ENCODE measurements at regions of chr2 and their contacts with region 1.

Region 1: DNA sequence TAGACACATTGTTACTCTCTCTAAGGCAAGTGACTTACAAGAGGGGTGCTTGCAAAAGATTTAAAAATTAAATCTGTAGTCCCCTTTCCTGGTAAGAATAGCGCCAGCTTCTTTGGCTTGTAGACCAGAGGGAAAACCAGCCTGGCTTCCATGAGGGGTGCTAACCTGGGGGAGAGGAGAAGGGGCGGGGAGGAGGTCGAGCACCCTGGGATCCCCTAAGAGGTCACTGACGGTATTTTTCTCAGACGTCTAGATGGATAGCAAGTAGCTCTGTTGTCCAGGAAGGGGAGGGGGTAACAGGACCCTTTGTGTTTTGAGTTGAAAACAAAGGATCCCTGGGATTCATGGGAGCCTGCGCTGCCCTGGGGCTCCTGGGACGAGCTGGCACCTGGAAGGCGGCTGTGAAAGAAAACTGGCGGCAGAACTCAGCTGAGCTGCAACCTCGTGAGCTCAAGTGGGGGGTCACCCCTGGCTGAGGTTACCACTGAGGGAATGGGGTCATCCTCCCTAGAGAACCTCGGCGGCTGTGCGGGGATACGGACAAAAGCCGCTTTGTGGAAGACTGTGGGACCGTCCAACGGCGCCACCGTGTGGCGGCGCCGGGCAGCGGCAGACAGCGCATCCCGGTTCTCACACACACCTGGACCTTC is 37.8 kb upstream of the MRPL19 start:
- DNase-seq: peak; percentile 21 to 57 (median 49)
- ATAC-seq: peak; percentile 84
- H3K4me3 ChIP-seq: no peak overlapping the region
- H3K4me3 Mint-ChIP-seq: peak overlapping the region in 4 of 10 donors; percentile 28 to 45 (median 38)
- H3K27ac ChIP-seq: no peak overlapping the region
- H3K27ac Mint-ChIP-seq: no peak overlapping the region
- H3K4me1 ChIP-seq: no peaks in the 10 kb centered on the region
- H3K4me1 Mint-ChIP-seq: peaks cover 0 to 1% (median 0%) of the 10 kb centered on the region in 7 donors
- H3K27me3 ChIP-seq: peaks cover 0 to 4% of the 10 kb centered on the region in 2 donors
- H3K27me3 Mint-ChIP-seq: peaks cover 46 to 74% (median 65%) of the 10 kb centered on the region in 5 donors

Region 2: GRCh38 chr2:75053484-75054112 is 555.2 kb before region 1 on chr2:
- CTCF ChIA-PET with region 1: no interaction called
- POLR2A ChIA-PET with region 1: no interaction called
- intact Hi-C with region 1: loop called in 1 of 2 experiments (anchors 5 kb)
- DNase-seq: no peak
- ATAC-seq: no peak
- H3K4me3 ChIP-seq: no peak overlapping the region
- H3K4me3 Mint-ChIP-seq: no peak overlapping the region
- H3K27ac ChIP-seq: no peak overlapping the region
- H3K27ac Mint-ChIP-seq: no peak overlapping the region
- H3K4me1 ChIP-seq: no peaks in the 10 kb centered on the region
- H3K4me1 Mint-ChIP-seq: no peaks in the 10 kb centered on the region
- H3K27me3 ChIP-seq: no peaks in the 10 kb centered on the region
- H3K27me3 Mint-ChIP-seq: peaks cover 0 to 3% (median 0%) of the 10 kb centered on the region in 5 donors

Region 3: DNA sequence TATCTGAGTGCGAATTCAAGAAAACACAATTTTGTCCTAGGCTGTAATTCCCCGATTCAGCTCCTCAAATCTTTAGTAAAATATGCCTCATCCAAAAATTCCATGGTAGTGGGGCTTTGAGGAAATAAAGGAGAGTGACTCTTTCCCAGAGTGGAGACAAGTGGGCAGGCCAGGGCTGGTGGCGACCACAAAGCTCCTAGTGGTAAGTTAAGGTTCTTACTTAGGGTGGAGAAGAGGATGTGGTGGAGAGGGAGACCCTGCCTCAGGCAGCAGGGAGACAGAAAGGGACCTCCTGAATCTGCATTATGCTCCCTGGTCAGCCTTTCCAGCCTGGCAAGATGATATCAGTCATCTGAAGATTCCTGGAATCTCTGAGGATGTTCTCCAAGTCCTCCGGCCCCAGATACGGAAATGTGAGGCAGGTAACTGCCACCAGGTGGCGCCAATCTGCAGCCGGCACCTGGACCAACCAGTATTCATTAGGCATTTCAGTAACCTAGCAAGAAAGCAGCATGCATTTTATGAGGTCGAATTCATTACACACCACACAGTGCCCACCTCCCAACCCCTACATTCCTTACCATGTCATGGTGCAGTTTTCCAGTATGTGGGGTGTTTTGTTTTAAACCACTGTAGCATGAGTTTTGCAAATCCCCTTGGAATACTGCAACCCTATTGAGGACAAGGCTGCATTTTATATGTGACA is 544.0 kb before region 1 on chr2:
- CTCF ChIA-PET with region 1: no interaction called
- POLR2A ChIA-PET with region 1: no interaction called
- intact Hi-C with region 1: loop called in 1 of 2 experiments (anchors 1 kb)
- DNase-seq: peak in 8 of 9 donors; percentile 12 to 45 (median 30)
- ATAC-seq: no peak
- H3K4me3 ChIP-seq: no peak overlapping the region
- H3K4me3 Mint-ChIP-seq: no peak overlapping the region
- H3K27ac ChIP-seq: no peak overlapping the region
- H3K27ac Mint-ChIP-seq: no peak overlapping the region
- H3K4me1 ChIP-seq: no peaks in the 10 kb centered on the region
- H3K4me1 Mint-ChIP-seq: peaks cover 0 to 16% (median 0%) of the 10 kb centered on the region in 7 donors
- H3K27me3 ChIP-seq: no peaks in the 10 kb centered on the region
- H3K27me3 Mint-ChIP-seq: no peaks in the 10 kb centered on the region

Region 4: DNA sequence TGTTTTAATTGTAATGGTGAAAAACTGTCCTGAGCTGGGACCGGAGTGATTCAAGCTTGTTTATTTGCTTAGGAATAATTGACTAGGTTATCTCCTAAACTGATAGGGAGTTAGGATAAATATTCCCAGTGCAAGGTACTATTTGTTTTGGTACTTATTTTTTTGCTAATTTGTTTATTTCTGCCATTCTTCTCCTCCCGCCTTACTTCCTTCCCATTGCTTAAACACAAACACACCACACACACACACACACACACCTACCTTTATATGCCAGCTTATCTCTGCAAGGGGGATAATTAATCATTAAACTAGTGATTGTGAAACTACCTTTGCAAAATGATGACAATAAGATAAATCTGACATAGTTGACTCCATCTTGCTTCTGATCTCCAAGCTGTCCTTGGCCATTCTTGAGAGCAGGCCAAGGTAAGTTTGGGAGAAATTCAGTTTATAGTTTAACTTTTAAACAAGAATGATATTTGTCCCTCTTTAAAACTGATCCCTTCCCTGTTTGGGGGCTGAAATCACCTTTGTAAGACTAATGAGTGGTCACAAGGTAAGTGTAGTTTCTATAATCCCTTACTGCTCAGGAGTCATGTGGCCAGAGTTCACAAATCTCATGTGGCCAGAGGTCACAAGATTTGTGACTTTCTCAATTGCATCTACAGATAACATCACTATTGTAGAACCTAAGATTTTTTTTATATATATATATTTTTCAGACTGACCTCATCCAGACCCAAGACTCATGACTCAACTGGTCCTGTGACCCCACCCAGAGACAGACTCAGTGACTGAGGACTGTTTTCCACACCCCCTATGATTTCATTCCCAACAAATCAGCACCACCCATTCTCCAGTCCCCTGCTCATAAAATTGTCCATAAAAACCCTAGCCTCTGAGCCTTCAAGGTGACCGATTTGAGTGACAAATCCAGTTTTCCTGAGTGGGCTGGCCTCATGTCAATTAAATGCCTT is 1996.4 kb after region 1 on chr2:
- CTCF ChIA-PET with region 1: no interaction called
- POLR2A ChIA-PET with region 1: no interaction called
- intact Hi-C with region 1: no loop called
- DNase-seq: no peak
- ATAC-seq: no peak
- H3K4me3 ChIP-seq: no peak overlapping the region
- H3K4me3 Mint-ChIP-seq: no peak overlapping the region
- H3K27ac ChIP-seq: no peak overlapping the region
- H3K27ac Mint-ChIP-seq: no peak overlapping the region
- H3K4me1 ChIP-seq: no peaks in the 10 kb centered on the region
- H3K4me1 Mint-ChIP-seq: no peaks in the 10 kb centered on the region
- H3K27me3 ChIP-seq: no peaks in the 10 kb centered on the region
- H3K27me3 Mint-ChIP-seq: no peaks in the 10 kb centered on the region

Measured in naive thymus-derived CD4-positive, alpha-beta T cell (primary cell).